Endothelial cell of umbilical vein (primary cell): ENCODE measurements at regions of chr18 and their contacts with region 1.

Region 1: GRCh38 chr18:8988261-8988871 is 114.1 kb upstream of the NDUFV2 start:
- DNase-seq: peak; percentile 62
- H3K4me3 ChIP-seq: no peak overlapping the region
- H3K27ac ChIP-seq: no peak overlapping the region
- H3K4me1 ChIP-seq: no peaks in the 10 kb centered on the region
- H3K27me3 ChIP-seq: no peaks in the 10 kb centered on the region
- CTCF ChIP-seq: peak; percentile 78 to 87
- POLR2A ChIP-seq: no peak

Region 2: GRCh38 chr18:8635087-8635486 is 353.3 kb before region 1 on chr18:
- CTCF ChIA-PET with region 1: no interaction called
- POLR2A ChIA-PET with region 1: no interaction called
- dilution Hi-C with region 1: loop called (anchors 25 kb)
- intact Hi-C with region 1: no loop called
- DNase-seq: peak; percentile 81
- H3K4me3 ChIP-seq: no peak overlapping the region
- H3K27ac ChIP-seq: peak overlapping the region; percentile 50
- H3K4me1 ChIP-seq: peaks cover 17% of the 10 kb centered on the region
- H3K27me3 ChIP-seq: no peaks in the 10 kb centered on the region
- CTCF ChIP-seq: no peak
- POLR2A ChIP-seq: no peak

Region 3: DNA sequence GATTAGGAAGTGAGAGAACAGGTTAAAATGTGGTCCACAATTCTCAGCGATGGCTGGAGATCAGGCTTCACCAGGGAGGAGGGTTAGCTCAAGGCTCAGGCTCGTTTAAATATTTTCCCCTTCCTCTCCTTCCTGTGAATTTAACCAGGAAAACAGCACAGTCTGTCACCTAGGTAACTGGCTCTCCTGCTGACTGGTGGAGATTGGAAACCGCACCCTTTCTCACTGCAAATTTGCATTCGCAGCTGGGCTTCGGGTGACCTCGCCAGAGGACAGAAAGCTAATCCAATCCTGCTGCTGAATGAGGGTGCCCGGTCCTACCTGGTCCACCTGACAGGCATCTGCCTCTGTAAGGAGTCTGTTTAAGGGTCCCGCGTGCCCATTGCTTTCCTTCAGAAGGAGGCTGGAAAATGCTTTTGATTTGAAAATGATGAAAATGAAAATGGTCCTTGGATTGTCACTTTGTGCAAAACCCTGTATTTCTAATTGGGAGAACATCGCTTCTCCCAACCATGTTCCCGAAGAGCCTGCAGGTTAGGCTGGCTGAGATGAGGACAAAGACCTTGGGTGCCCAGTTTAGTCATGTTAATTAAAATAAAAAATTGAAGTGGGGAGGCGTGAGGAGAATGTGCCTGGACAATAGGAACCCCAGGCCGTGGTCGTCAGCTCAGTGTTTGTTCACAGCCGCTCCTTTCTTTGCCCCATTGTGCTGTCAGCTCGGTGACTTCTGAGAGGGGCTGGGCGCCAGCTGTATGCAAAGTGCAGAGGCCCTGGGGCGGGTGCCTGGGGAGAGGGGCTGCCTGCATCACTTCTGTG is 326.4 kb before region 1 on chr18:
- CTCF ChIA-PET with region 1: interaction called, 146 read pairs
- POLR2A ChIA-PET with region 1: no interaction called
- dilution Hi-C with region 1: no loop called
- intact Hi-C with region 1: no loop called
- DNase-seq: peak; percentile 68
- H3K4me3 ChIP-seq: peak overlapping the region in 1 of 3 experiments; percentile 23
- H3K27ac ChIP-seq: peak overlapping the region; percentile 37
- H3K4me1 ChIP-seq: peaks cover 26% of the 10 kb centered on the region
- H3K27me3 ChIP-seq: no peaks in the 10 kb centered on the region
- CTCF ChIP-seq: no peak
- POLR2A ChIP-seq: no peak

Region 4: DNA sequence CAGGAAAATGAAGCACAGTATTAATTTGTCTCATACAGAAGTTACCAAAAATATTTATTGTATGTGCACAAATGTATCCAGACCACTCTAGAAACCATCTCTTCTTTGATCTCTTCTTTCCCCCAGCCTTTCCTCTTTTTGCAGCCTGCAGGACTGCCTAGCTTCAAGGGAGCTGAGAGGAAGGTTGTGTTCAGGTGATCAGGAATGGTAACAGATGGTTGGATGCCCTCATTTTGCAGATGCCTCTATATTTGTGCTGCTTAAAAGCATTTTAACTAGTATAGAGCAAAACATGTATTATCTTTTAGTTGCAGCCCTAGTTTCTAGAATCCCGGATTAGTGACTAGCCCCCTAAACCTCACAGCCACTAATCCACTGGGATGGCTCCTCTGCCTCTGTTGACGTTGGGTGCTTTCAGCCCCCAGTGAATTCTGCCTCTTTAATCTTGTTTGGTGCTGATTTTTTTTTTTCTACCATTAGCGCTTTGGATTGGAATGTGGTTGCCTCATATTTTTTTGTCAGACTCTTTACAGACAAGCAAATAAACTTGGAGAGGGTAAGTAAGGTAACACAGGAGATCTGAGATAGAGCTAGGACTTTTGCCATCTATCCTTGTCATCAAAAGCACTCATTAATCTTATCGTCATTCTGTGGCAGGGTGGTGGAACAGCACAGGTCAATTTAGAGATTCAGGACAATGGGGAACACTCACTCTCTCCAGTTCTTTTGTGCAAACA is 10.3 kb after region 1 on chr18:
- CTCF ChIA-PET with region 1: interaction called, 12 read pairs
- POLR2A ChIA-PET with region 1: no interaction called
- dilution Hi-C with region 1: no loop called
- intact Hi-C with region 1: no loop called
- DNase-seq: no peak
- H3K4me3 ChIP-seq: no peak overlapping the region
- H3K27ac ChIP-seq: no peak overlapping the region
- H3K4me1 ChIP-seq: peaks cover 7% of the 10 kb centered on the region
- H3K27me3 ChIP-seq: no peaks in the 10 kb centered on the region
- CTCF ChIP-seq: no peak
- POLR2A ChIP-seq: no peak

Region 5: GRCh38 chr18:9011431-9011830 is 23.1 kb after region 1 on chr18:
- CTCF ChIA-PET with region 1: no interaction called
- POLR2A ChIA-PET with region 1: no interaction called
- dilution Hi-C with region 1: no loop called
- intact Hi-C with region 1: no loop called
- DNase-seq: no peak
- H3K4me3 ChIP-seq: no peak overlapping the region
- H3K27ac ChIP-seq: no peak overlapping the region
- H3K4me1 ChIP-seq: peaks cover 10% of the 10 kb centered on the region
- H3K27me3 ChIP-seq: peaks cover 0 to 3% of the 10 kb centered on the region in 2 experiments
- CTCF ChIP-seq: no peak
- POLR2A ChIP-seq: no peak

Region 6: GRCh38 chr18:9055185-9055584 is 66.8 kb after region 1 on chr18:
- CTCF ChIA-PET with region 1: interaction called, 16 read pairs
- POLR2A ChIA-PET with region 1: no interaction called
- dilution Hi-C with region 1: no loop called
- intact Hi-C with region 1: loop called (anchors 1 kb)
- DNase-seq: peak; percentile 81
- H3K4me3 ChIP-seq: no peak overlapping the region
- H3K27ac ChIP-seq: no peak overlapping the region
- H3K4me1 ChIP-seq: peaks cover 9% of the 10 kb centered on the region
- H3K27me3 ChIP-seq: no peaks in the 10 kb centered on the region
- CTCF ChIP-seq: no peak
- POLR2A ChIP-seq: no peak

Region 7: GRCh38 chr18:9103376-9103873 is 115.1 kb after region 1 on chr18:
- CTCF ChIA-PET with region 1: no interaction called
- POLR2A ChIA-PET with region 1: no interaction called
- dilution Hi-C with region 1: no loop called
- intact Hi-C with region 1: no loop called
- DNase-seq: peak; percentile 70
- H3K4me3 ChIP-seq: peak overlapping the region; percentile 69 to 98 (median 92)
- H3K27ac ChIP-seq: peak overlapping the region; percentile 95
- H3K4me1 ChIP-seq: peaks cover 46% of the 10 kb centered on the region
- H3K27me3 ChIP-seq: no peaks in the 10 kb centered on the region
- CTCF ChIP-seq: no peak
- POLR2A ChIP-seq: no peak